ENCODE measurements at regions of chr5 and their contacts with region 1.

Region 1: DNA sequence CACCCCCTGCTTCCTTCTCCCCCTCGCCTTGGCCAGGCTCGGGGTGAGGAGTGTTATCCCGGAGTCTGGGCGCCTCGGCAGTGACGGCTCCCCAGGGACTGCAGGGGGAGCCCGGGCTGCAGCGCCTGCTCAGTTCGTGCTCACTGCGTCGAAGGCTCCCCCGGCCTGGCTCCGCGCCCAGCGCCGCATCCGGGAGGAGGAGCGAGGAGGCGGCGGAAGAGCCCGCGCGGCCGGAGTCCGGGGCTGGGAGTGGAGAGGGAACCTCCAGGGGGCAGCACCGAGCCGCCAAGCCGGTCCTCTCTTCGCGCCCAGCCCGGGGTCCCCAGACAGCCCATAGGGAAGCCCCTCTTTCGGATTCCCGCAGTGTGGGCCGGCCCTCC is 1.3 kb upstream of the EGR1 start:
- DNase-seq: peak; percentile 95
- H3K4me3 Mint-ChIP-seq: peak overlapping the region; percentile 83
- H3K27ac Mint-ChIP-seq: peak overlapping the region; percentile 95
- H3K4me1 Mint-ChIP-seq: peaks cover 50% of the 10 kb centered on the region
- H3K27me3 Mint-ChIP-seq: no peaks in the 10 kb centered on the region

Region 2: GRCh38 chr5:138178516-138179276 is 285.3 kb before region 1 on chr5 and contains the starts of genes BRD8 and KIF20A:
- CTCF ChIA-PET with region 1: no interaction called
- POLR2A ChIA-PET with region 1: interaction called, 3 read pairs
- intact Hi-C with region 1: loop called (anchors 1 kb)
- DNase-seq: peak; percentile 96
- H3K4me3 Mint-ChIP-seq: no peak within 1 kb of the TSS
- H3K27ac Mint-ChIP-seq: no peak within 1 kb of the TSS
- H3K4me1 Mint-ChIP-seq: peaks cover 17% of the 10 kb centered on the region
- H3K27me3 Mint-ChIP-seq: no peaks in the 10 kb centered on the region
- total RNA-seq, gene BRD8: 62.9 to 65.8 TPM
- total RNA-seq, gene KIF20A: 55.5 to 60.3 TPM

Region 3: DNA sequence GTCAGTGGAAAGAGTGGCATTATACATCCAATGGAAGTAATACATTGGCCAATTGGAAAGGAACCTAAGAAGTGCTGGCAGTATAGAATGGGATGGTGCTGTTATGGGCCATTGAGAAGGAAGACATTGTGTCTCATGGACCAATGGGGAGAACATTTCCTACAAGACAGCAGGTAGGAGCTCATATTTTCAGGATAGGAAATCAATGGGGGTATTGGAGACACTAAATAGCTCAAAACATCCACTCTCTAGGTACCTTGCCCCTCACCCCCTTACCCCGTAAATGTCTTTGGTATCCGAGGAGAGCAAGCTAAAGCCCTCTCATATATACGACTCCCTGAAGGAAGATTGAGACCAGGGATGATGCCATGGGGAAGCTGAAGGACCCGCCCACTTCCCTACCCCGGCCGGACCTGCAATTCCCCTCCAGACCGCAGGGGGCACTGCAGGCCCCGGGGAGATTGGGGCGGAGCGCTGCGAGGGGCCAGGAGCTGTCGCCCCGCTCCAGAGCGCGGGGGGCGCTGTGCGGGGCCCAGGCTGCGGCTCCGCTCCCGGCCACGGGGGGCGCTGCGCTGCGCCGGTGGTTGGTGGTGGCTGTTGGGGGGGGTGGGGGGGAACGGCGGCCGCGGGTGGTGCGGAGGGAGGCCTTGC is 111.8 kb before region 1 on chr5 and contains the start of gene KDM3B:
- CTCF ChIA-PET with region 1: interaction called, 25 read pairs
- POLR2A ChIA-PET with region 1: interaction called, 6 read pairs
- intact Hi-C with region 1: no loop called
- DNase-seq: peak; percentile 95
- H3K4me3 Mint-ChIP-seq: peak within 1 kb of the TSS; percentile 91
- H3K27ac Mint-ChIP-seq: peak within 1 kb of the TSS; percentile 91
- H3K4me1 Mint-ChIP-seq: peaks cover 30% of the 10 kb centered on the region
- H3K27me3 Mint-ChIP-seq: no peaks in the 10 kb centered on the region
- total RNA-seq, gene KDM3B: 38.6 to 39.6 TPM

Region 4: DNA sequence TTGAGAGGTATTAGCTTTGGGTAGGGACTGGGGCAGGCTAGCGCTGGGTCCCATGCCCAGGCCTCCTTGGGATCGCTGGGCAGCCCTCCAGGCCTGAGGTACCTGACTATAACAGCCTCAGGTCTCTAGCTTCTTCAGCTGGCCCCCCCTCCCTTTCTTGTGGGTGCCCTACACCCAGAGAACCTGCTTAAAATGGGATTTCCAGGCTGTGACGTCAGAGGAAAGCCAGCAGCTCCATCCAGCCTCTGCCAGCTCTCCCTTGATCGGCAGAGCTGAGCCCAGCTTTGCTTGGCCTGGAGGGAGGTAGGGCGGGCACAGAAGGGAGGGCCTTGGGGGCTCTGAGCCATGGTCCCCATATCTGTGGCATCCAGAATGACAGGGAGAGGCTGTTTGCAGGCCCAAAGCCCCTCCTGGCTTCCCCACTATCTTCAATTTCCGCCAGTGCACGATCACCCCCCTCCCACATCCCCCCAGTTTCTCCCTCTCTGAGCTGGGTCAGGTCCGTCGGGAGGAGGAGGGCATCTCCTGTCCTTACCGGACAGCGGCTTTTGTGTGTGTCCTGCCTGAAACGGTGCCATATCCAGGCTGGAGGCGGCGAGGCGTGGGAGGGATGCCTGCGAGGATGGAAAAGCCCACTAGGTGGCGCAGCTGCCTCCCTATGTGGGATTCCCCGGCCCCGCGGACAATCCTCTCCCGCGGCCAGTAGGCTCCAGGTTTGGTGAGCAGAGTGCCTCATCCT is 14.3 kb before region 1 on chr5:
- CTCF ChIA-PET with region 1: interaction called, 56 read pairs
- POLR2A ChIA-PET with region 1: interaction called, 12 read pairs
- intact Hi-C with region 1: no loop called
- DNase-seq: peak; percentile 92
- H3K4me3 Mint-ChIP-seq: peak overlapping the region; percentile 33
- H3K27ac Mint-ChIP-seq: no peak overlapping the region
- H3K4me1 Mint-ChIP-seq: peaks cover 6% of the 10 kb centered on the region
- H3K27me3 Mint-ChIP-seq: peaks cover 4% of the 10 kb centered on the region

Region 5: DNA sequence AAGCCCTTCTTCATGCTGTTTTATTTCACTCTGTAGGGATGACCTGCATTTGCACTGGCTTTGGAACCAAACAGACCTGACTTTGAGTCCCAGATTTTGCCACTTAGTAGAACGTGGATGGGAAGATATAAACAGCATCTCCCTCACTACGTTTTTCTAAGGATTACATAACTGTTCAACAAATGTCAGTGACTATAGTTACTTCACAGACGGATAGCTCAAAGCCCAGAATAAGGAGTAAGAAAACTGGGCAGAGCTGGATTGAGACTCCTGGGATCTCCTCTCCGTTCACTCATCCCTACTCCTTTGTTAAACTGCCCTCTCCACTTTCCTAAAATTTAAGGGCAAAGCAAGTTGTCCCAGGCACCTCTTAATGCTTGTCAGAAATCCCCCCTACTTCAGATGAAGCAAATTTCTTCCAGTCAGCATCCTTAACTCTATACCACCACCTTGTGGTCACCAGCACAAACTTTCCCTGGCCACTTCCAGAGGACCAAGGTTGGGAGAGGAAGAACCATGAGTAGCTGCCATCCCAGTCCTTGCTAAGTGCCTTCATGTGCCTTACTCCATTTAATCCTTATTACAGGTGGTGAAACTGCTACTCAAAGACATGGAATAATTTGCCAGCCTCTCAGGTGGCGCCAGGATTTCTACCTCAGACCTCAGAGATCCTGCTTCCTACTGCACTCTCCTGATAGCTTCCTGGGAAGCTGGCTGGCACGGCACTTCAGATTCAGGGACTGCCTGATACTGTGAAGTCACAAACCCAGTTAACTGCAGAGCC is 39.7 kb after region 1 on chr5:
- CTCF ChIA-PET with region 1: interaction called, 33 read pairs
- POLR2A ChIA-PET with region 1: interaction called, 4 read pairs
- intact Hi-C with region 1: loop called (anchors 1 kb)
- DNase-seq: peak; percentile 39
- H3K4me3 Mint-ChIP-seq: no peak overlapping the region
- H3K27ac Mint-ChIP-seq: no peak overlapping the region
- H3K4me1 Mint-ChIP-seq: no peaks in the 10 kb centered on the region
- H3K27me3 Mint-ChIP-seq: no peaks in the 10 kb centered on the region

Region 6: DNA sequence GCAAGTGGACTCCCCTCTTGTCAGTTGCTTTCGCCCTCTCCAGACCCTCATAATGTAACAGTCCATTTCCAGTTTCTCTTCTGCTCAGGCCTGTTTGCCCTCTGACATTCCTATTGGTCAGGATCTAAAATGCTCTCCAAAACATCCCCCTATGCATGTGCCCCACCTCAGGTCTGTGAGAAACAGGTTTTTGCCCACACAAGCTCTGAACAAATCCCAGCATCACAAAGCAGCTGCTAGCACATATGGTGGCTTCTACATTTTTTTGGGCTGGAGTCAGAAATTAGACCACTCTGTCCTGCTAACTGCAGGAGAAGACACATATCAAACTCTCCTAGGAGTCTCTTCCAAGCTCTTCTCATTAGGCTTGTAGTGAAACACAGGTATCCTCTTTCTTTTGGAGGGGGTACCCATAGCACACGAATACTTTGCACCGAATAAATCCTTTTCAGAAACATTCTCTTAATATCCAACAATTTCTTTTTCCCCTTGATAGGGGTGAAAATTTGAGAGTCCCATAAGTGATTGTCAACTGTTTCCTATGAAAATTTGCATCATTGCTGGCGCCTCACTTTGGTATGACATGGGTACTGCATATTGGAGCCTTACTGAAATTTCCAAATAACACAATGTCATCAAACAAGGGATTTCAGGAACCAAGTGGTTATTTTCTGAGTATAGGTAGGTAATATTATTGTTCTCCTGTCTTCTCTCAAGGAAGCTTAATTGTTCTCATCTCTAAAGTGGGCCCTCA is 130.5 kb after region 1 on chr5:
- CTCF ChIA-PET with region 1: no interaction called
- POLR2A ChIA-PET with region 1: no interaction called
- intact Hi-C with region 1: no loop called
- DNase-seq: no peak
- H3K4me3 Mint-ChIP-seq: no peak overlapping the region
- H3K27ac Mint-ChIP-seq: no peak overlapping the region
- H3K4me1 Mint-ChIP-seq: no peaks in the 10 kb centered on the region
- H3K27me3 Mint-ChIP-seq: peaks cover 20% of the 10 kb centered on the region

Region 7: DNA sequence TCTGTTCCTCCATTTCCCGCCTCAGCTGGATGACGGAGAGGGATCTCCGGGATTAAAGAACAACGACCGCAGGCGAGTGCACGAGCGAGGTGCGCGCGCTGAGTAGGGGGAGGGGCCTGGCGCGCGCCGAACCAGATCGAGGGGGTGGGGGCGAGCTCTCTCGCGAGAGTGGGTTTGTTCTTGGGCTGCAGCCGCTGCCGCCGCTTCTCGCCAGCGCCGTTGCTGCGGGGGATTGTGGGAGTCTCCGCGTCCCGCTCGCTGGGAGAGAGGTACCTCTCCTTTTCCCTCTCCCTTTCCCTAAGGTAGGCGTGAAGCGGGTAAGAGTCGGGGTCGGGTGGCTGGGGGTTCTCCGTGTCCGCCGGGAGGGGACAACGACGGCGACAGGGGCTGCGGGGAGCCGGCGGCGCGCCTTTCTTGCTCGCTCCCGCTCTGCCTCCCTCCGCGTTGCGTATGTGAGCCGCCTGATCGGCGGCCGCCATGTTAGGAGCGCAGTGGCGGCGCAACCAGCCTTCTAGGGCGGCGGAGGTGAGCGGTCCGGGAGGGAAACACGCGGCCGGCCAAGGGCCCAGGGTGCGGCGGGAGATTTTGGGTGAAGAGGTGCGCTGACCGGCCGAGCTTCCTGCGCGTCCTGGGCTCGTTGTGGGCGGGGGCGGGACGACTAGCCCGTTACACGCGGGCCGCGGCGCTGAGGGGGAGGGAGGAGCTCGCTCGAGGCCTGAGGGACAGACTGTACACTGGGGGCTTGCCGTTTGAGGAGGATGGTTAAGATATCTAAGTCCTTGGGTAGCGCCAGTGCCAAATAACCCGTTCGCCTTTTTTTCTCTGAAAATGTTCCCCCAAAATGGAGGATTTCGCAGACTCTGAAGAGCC is 829.7 kb after region 1 on chr5 and contains the start of gene MATR3:
- CTCF ChIA-PET with region 1: no interaction called
- POLR2A ChIA-PET with region 1: no interaction called
- intact Hi-C with region 1: loop called (anchors 2 kb)
- DNase-seq: peak; percentile 96
- H3K4me3 Mint-ChIP-seq: peak within 1 kb of the TSS; percentile 95
- H3K27ac Mint-ChIP-seq: peak within 1 kb of the TSS; percentile 98
- H3K4me1 Mint-ChIP-seq: peaks cover 31% of the 10 kb centered on the region
- H3K27me3 Mint-ChIP-seq: no peaks in the 10 kb centered on the region
- total RNA-seq, gene MATR3: 163 to 179 TPM

Region 8: GRCh38 chr5:139392678-139393496 is 928.9 kb after region 1 on chr5:
- CTCF ChIA-PET with region 1: no interaction called
- POLR2A ChIA-PET with region 1: no interaction called
- intact Hi-C with region 1: no loop called
- DNase-seq: peak; percentile 93
- H3K4me3 Mint-ChIP-seq: peak overlapping the region; percentile 93
- H3K27ac Mint-ChIP-seq: peak overlapping the region; percentile 87
- H3K4me1 Mint-ChIP-seq: peaks cover 34% of the 10 kb centered on the region
- H3K27me3 Mint-ChIP-seq: no peaks in the 10 kb centered on the region

Measured in activated CD4-positive, alpha-beta memory T cell treated with anti-CD3 and anti-CD28 coated beads for 36 hours (primary cell).